CD14-positive monocyte (primary cell): ENCODE measurements at regions of chr18 and their contacts with region 1.

Region 1: DNA sequence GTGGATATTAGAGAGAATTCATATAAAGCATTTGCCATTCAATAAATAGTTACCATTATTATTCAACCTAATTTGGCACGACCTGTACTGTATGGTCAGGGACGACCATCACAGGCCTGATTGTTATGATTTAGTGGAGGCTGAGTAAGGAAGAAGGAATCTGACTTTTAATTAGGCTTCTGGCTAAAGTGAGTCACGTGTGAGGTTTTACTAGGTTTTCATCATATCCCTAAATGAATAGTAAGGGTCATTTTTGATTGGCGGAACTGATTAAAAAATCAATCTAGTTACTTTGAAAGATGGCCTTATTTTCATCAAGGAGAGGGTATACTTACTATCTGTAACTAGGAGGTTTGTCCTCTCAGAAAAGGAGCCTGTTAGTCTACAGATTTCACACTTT is 143.4 kb downstream of the ADCYAP1 start:
- DNase-seq: no peak
- H3K4me3 ChIP-seq: no peak overlapping the region
- H3K4me3 Mint-ChIP-seq: no peak overlapping the region
- H3K27ac ChIP-seq: no peak overlapping the region
- H3K27ac Mint-ChIP-seq: no peak overlapping the region
- H3K4me1 ChIP-seq: no peaks in the 10 kb centered on the region
- H3K4me1 Mint-ChIP-seq: no peaks in the 10 kb centered on the region
- H3K27me3 ChIP-seq: no peaks in the 10 kb centered on the region
- H3K27me3 Mint-ChIP-seq: no peaks in the 10 kb centered on the region
- CTCF ChIP-seq: no peak

Region 2: DNA sequence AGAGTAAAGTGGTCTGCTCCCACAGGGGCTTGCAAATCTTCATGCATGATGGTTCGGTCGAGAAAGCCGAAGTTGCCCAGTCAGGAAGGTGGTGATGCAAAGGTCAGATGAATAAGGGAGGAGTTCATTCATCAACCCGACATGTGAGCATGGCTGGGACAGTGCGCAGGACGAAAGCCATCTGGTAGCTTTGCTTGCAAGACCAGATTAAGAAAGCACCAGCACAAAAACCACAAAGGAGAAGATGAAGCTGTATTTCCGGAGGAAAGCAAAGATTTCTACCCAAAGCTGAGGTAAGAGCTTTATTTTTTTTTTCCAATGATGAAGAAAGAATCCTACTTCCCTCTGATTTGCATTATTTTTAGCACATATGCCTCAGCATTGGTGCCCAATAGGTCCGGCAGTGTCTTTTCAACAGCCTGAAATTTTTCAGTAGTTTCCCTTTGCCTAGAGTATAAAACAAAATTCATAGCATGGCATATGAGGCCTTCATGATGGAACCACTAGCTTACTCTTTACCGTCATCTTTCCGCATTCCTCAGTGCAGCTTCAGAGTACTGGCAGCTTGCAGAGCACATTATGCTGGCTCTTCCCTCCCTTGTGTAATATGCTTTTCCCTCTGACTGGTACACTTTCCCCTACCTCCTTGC is 668.2 kb before region 1 on chr18:
- intact Hi-C with region 1: no loop called
- DNase-seq: peak; percentile 75 to 90 (median 87)
- H3K4me3 ChIP-seq: peak overlapping the region in 1 of 3 experiments; percentile 55
- H3K4me3 Mint-ChIP-seq: peak overlapping the region; percentile 18 to 89
- H3K27ac ChIP-seq: peak overlapping the region; percentile 68 to 71
- H3K27ac Mint-ChIP-seq: peak overlapping the region; percentile 93 to 98 (median 95)
- H3K4me1 ChIP-seq: peaks cover 69 to 73% of the 10 kb centered on the region in 2 donors
- H3K4me1 Mint-ChIP-seq: peaks cover 74% of the 10 kb centered on the region
- H3K27me3 ChIP-seq: no peaks in the 10 kb centered on the region
- H3K27me3 Mint-ChIP-seq: peaks cover 0 to 3% (median 2%) of the 10 kb centered on the region in 3 donors
- CTCF ChIP-seq: no peak

Region 3: GRCh38 chr18:1104181-1104881 is 56.3 kb after region 1 on chr18:
- intact Hi-C with region 1: loop called in 1 of 2 experiments (anchors 10 kb)
- DNase-seq: no peak
- H3K4me3 ChIP-seq: no peak overlapping the region
- H3K4me3 Mint-ChIP-seq: no peak overlapping the region
- H3K27ac ChIP-seq: no peak overlapping the region
- H3K27ac Mint-ChIP-seq: no peak overlapping the region
- H3K4me1 ChIP-seq: no peaks in the 10 kb centered on the region
- H3K4me1 Mint-ChIP-seq: no peaks in the 10 kb centered on the region
- H3K27me3 ChIP-seq: no peaks in the 10 kb centered on the region
- H3K27me3 Mint-ChIP-seq: peaks cover 0 to 2% (median 0%) of the 10 kb centered on the region in 3 donors
- CTCF ChIP-seq: no peak